H1 (cell line): ENCODE measurements at regions of chr13 and their contacts with region 1.

Region 1: GRCh38 chr13:53311561-53311960 is 282.9 kb downstream of the OLFM4 start:
- DNase-seq: no peak
- H3K4me3 ChIP-seq: no peak overlapping the region
- H3K27ac ChIP-seq: no peak overlapping the region
- H3K4me1 ChIP-seq: peaks cover 0 to 5% (median 2%) of the 10 kb centered on the region in 4 experiments; a peak in 1 of 7 replicates
- H3K27me3 ChIP-seq: peaks cover 0 to 6% (median 0%) of the 10 kb centered on the region in 4 experiments; a peak in 4 of 7 replicates
- CTCF ChIP-seq: peak in 1 of 3 experiments; percentile 36; a peak in 2 of 4 replicates
- EP300 ChIP-seq: no peak
- POLR2A ChIP-seq: no peak
- RAD21 ChIP-seq: no peak; a peak in 1 of 4 replicates

Region 2: DNA sequence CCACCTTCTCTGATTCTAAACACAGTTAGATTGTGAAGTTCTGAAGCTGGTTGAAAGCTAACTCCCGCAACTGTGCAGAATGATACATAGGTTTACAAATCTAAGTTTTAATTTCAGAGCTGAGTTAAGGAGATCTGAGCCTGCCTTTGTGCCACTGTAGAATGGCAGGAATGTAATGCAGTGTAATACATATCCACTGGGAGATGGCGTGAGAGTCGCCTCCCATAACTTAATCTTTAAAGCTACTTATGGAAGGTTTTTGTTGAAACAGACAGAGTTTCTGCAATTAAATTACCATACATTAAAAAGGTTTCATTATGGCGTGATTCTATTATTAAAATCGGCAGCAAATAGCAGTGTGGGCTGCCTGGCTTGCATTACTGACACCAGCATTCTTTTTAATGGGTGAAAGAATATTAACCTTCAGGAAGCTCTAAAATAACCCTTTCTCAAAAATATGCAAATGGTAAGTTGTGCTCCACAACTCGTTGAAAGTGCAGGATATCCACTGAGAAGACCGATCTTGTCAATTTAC is 25.6 kb before region 1 on chr13:
- CTCF ChIA-PET with region 1: interaction called, 14 read pairs
- POLR2A ChIA-PET with region 1: no interaction called
- DNase-seq: no peak
- H3K4me3 ChIP-seq: no peak overlapping the region
- H3K27ac ChIP-seq: no peak overlapping the region
- H3K4me1 ChIP-seq: no peaks in the 10 kb centered on the region
- H3K27me3 ChIP-seq: peaks cover 12 to 37% (median 22%) of the 10 kb centered on the region in 4 experiments
- CTCF ChIP-seq: no peak
- EP300 ChIP-seq: no peak
- POLR2A ChIP-seq: no peak
- RAD21 ChIP-seq: no peak

Region 3: GRCh38 chr13:53301449-53301848 is 10.1 kb before region 1 on chr13:
- CTCF ChIA-PET with region 1: interaction called, 11 read pairs
- POLR2A ChIA-PET with region 1: no interaction called
- DNase-seq: no peak
- H3K4me3 ChIP-seq: no peak overlapping the region
- H3K27ac ChIP-seq: no peak overlapping the region
- H3K4me1 ChIP-seq: no peaks in the 10 kb centered on the region
- H3K27me3 ChIP-seq: no peaks in the 10 kb centered on the region
- CTCF ChIP-seq: no peak
- EP300 ChIP-seq: no peak
- POLR2A ChIP-seq: no peak
- RAD21 ChIP-seq: no peak

Region 4: GRCh38 chr13:53327680-53328315 is 16.2 kb after region 1 on chr13:
- CTCF ChIA-PET with region 1: interaction called, 13 read pairs
- POLR2A ChIA-PET with region 1: no interaction called
- DNase-seq: no peak
- H3K4me3 ChIP-seq: no peak overlapping the region
- H3K27ac ChIP-seq: no peak overlapping the region
- H3K4me1 ChIP-seq: no peaks in the 10 kb centered on the region
- H3K27me3 ChIP-seq: no peaks in the 10 kb centered on the region
- CTCF ChIP-seq: no peak
- EP300 ChIP-seq: no peak
- POLR2A ChIP-seq: no peak
- RAD21 ChIP-seq: no peak

Region 5: GRCh38 chr13:53719281-53719680 is 407.7 kb after region 1 on chr13:
- CTCF ChIA-PET with region 1: no interaction called
- POLR2A ChIA-PET with region 1: no interaction called
- DNase-seq: no peak
- H3K4me3 ChIP-seq: no peak overlapping the region
- H3K27ac ChIP-seq: no peak overlapping the region
- H3K4me1 ChIP-seq: no peaks in the 10 kb centered on the region
- H3K27me3 ChIP-seq: no peaks in the 10 kb centered on the region
- CTCF ChIP-seq: no peak
- EP300 ChIP-seq: no peak
- POLR2A ChIP-seq: no peak
- RAD21 ChIP-seq: no peak